Mammary epithelial cell (primary cell): ENCODE measurements at regions of chrX and their contacts with region 1.

Region 1: GRCh38 chrX:5870238-5870637 is 358.4 kb downstream of the NLGN4X start:
- DNase-seq: no peak
- H3K4me3 ChIP-seq: no peak overlapping the region
- H3K27ac ChIP-seq: peak overlapping the region; percentile 86
- H3K4me1 ChIP-seq: peaks cover 12% of the 10 kb centered on the region
- H3K27me3 ChIP-seq: no peaks in the 10 kb centered on the region
- CTCF ChIP-seq: no peak

Region 2: GRCh38 chrX:5708251-5708650 is 162.0 kb before region 1 on chrX:
- CTCF ChIA-PET with region 1: no interaction called
- dilution Hi-C with region 1: no loop called
- in situ Hi-C with region 1: no loop called
- intact Hi-C with region 1: no loop called
- DNase-seq: peak; percentile 60
- H3K4me3 ChIP-seq: no peak overlapping the region
- H3K27ac ChIP-seq: no peak overlapping the region
- H3K4me1 ChIP-seq: peaks cover 10% of the 10 kb centered on the region
- H3K27me3 ChIP-seq: no peaks in the 10 kb centered on the region
- CTCF ChIP-seq: no peak

Region 3: DNA sequence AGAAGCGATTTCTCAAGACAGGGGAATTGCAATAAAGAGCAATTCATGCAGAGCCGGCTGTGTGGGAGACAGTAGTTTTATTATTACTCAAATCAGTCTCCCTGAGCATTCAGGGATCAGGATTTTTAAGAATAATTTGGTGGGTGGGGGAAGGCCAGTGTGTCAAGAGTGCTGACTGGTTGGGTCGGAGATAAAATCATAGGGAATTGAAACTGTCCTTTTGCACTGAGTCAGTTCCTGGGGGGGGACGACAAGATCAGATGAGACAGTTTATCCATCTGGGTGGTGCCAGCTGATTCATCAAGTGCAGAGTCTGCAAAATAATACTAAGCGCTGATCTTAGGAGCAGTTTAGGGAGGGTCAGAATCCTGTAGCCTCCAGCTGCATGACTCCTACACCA is 144.0 kb before region 1 on chrX:
- CTCF ChIA-PET with region 1: no interaction called
- dilution Hi-C with region 1: no loop called
- in situ Hi-C with region 1: no loop called
- intact Hi-C with region 1: loop called (anchors 5 kb)
- DNase-seq: peak; percentile 90
- H3K4me3 ChIP-seq: peak overlapping the region; percentile 11 to 46 (median 41)
- H3K27ac ChIP-seq: peak overlapping the region; percentile 90
- H3K4me1 ChIP-seq: peaks cover 23% of the 10 kb centered on the region
- H3K27me3 ChIP-seq: no peaks in the 10 kb centered on the region
- CTCF ChIP-seq: no peak